IMR-90 (cell line): ENCODE measurements at regions of chr13 and their contacts with region 1.

Region 1: GRCh38 chr13:52665325-52665724 is 12.7 kb downstream of the SUGT1 start:
- DNase-seq: peak; percentile 16
- ATAC-seq: no peak
- H3K4me3 ChIP-seq: no peak overlapping the region
- H3K27ac ChIP-seq: no peak overlapping the region
- H3K4me1 ChIP-seq: no peaks in the 10 kb centered on the region
- H3K27me3 ChIP-seq: no peaks in the 10 kb centered on the region
- CTCF ChIP-seq: peak; percentile 45
- POLR2A ChIP-seq: no peak
- RAD21 ChIP-seq: peak; percentile 28; the same call in 1 of the 2 replicates

Region 2: GRCh38 chr13:52652196-52652979 is 12.9 kb before region 1 on chr13 and contains the start of gene SUGT1:
- CTCF ChIA-PET with region 1: interaction called, 13 read pairs
- POLR2A ChIA-PET with region 1: interaction called, 3 read pairs
- dilution Hi-C with region 1: no loop called
- in situ Hi-C with region 1: no loop called
- intact Hi-C with region 1: no loop called
- DNase-seq: peak; percentile 97
- ATAC-seq: peak; percentile 97
- H3K4me3 ChIP-seq: peak within 1 kb of the TSS; percentile 93
- H3K27ac ChIP-seq: peak within 1 kb of the TSS; percentile 96
- H3K4me1 ChIP-seq: peaks cover 2% of the 10 kb centered on the region; the same call in 1 of the 2 replicates
- H3K27me3 ChIP-seq: no peaks in the 10 kb centered on the region
- CTCF ChIP-seq: peak; percentile 68
- POLR2A ChIP-seq: peak; percentile 91
- RAD21 ChIP-seq: peak; percentile 42
- total RNA-seq, gene SUGT1: 21.5 and 41.4 TPM in 2 replicates

Region 3: DNA sequence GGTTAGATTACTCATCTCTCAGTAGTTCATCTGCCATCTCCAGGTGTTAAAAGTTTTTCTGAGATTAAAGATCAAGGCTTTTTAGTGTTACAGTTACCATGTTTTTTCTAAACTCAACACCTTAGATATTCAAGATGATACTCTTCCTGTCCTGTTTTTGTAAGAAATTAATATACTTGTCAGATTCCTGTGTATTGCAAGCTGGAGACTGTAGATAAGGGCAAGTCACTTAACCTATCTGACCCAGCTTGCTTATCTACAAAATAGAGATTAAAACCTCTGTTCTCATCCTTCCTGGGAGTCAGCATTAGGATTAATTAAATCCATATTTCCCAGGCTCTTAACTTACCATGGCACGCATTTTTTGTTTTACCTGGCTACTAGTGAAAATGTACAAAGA is 12.5 kb after region 1 on chr13:
- CTCF ChIA-PET with region 1: interaction called, 12 read pairs
- POLR2A ChIA-PET with region 1: no interaction called
- dilution Hi-C with region 1: no loop called
- in situ Hi-C with region 1: no loop called
- intact Hi-C with region 1: no loop called
- DNase-seq: no peak
- ATAC-seq: no peak
- H3K4me3 ChIP-seq: no peak overlapping the region
- H3K27ac ChIP-seq: no peak overlapping the region
- H3K4me1 ChIP-seq: no peaks in the 10 kb centered on the region
- H3K27me3 ChIP-seq: no peaks in the 10 kb centered on the region
- CTCF ChIP-seq: no peak
- POLR2A ChIP-seq: no peak
- RAD21 ChIP-seq: no peak

Region 4: DNA sequence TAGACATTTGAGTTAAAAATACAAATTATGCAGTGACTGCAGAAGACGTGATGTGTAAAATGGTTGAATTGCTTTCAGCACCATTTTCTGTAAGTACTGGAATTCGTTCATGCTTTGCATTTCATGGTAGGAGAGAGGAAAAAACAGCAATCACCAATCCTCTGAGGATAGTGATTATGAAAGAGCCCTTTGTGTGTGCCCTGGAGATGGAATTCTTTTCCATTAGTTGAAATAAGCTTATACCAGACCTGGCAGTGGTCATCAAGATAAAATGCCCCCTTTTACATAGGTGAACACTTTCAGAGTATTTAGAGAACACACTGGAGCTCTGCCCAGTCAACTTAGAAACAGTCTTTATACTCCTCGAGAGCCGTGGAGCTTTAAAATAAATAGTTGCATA is 72.6 kb after region 1 on chr13:
- CTCF ChIA-PET with region 1: no interaction called
- POLR2A ChIA-PET with region 1: no interaction called
- dilution Hi-C with region 1: no loop called
- in situ Hi-C with region 1: no loop called
- intact Hi-C with region 1: no loop called
- DNase-seq: no peak
- ATAC-seq: no peak
- H3K4me3 ChIP-seq: no peak overlapping the region
- H3K27ac ChIP-seq: no peak overlapping the region
- H3K4me1 ChIP-seq: no peaks in the 10 kb centered on the region; the same call in 1 of the 2 replicates
- H3K27me3 ChIP-seq: peaks cover 28% of the 10 kb centered on the region
- CTCF ChIP-seq: no peak
- POLR2A ChIP-seq: no peak
- RAD21 ChIP-seq: no peak

Region 5: GRCh38 chr13:52968074-52968700 is 302.9 kb after region 1 on chr13:
- CTCF ChIA-PET with region 1: interaction called, 6 read pairs
- POLR2A ChIA-PET with region 1: no interaction called
- dilution Hi-C with region 1: no loop called
- in situ Hi-C with region 1: no loop called
- intact Hi-C with region 1: loop called (anchors 1 kb)
- DNase-seq: peak; percentile 60
- ATAC-seq: peak; percentile 88
- H3K4me3 ChIP-seq: no peak overlapping the region
- H3K27ac ChIP-seq: no peak overlapping the region
- H3K4me1 ChIP-seq: no peaks in the 10 kb centered on the region
- H3K27me3 ChIP-seq: no peaks in the 10 kb centered on the region
- CTCF ChIP-seq: peak; percentile 99
- POLR2A ChIP-seq: no peak
- RAD21 ChIP-seq: peak; percentile 70

Region 6: GRCh38 chr13:52980695-52981094 is 315.4 kb after region 1 on chr13:
- CTCF ChIA-PET with region 1: no interaction called
- POLR2A ChIA-PET with region 1: no interaction called
- dilution Hi-C with region 1: no loop called
- in situ Hi-C with region 1: no loop called
- intact Hi-C with region 1: no loop called
- DNase-seq: no peak
- ATAC-seq: no peak
- H3K4me3 ChIP-seq: no peak overlapping the region
- H3K27ac ChIP-seq: no peak overlapping the region
- H3K4me1 ChIP-seq: no peaks in the 10 kb centered on the region
- H3K27me3 ChIP-seq: no peaks in the 10 kb centered on the region
- CTCF ChIP-seq: no peak
- POLR2A ChIP-seq: no peak
- RAD21 ChIP-seq: no peak